Activated naive CD4-positive, alpha-beta T cell treated with anti-CD3 and anti-CD28 coated beads for 36 hours (primary cell): ENCODE measurements at regions of chr2 and their contacts with region 1.

Region 1: DNA sequence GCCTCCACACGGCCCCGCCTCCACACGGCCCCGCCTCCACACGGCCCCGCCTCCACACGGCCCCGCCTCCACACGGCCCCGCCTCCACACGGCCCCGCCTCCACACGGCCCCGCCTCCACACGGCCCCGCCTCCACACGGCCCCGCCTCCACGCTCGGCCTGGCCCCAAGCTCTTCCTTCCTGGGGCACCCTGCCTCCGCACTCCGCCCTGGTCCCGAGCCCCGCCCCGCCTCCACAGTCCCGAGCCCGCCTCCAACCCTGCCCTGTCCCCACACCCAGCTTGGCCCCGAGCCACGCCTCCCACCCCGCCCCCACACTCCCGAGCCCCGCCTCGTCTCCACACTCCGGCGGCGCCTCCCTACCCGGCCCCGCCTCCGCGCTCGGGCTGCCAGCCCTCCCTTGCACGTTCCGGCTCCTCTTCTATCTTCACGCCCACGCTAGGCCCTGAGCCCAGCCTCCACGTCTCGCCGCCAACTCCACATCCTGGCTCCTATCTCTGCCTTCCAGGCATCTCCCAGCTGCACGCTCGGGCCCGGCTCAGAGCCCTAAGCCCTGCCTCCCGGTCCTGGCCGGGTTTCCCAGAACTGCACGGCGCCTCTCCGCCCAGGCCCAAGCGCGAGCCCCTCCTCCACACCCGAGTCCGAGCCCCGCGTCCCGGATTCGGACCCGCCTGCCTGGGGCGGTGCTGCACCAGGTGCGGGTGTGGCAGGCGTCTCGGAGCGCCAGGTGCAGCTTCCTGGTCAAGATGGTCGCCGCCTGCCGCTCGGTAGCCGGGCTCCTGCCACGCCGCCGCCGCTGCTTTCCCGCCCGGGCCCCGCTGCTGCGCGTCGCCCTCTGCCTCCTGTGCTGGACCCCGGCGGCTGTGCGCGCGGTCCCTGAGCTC is at the start of gene TMEM87B:
- DNase-seq: peak; percentile 99
- H3K4me3 Mint-ChIP-seq: peak within 1 kb of the TSS; percentile 97
- H3K27ac Mint-ChIP-seq: peak within 1 kb of the TSS; percentile 99
- H3K4me1 Mint-ChIP-seq: peaks cover 42% of the 10 kb centered on the region
- H3K27me3 Mint-ChIP-seq: no peaks in the 10 kb centered on the region
- total RNA-seq, gene TMEM87B: 10.5 to 12.0 TPM

Region 2: GRCh38 chr2:112092286-112093041 is 37.4 kb after region 1 on chr2:
- CTCF ChIA-PET with region 1: interaction called, 3 read pairs
- intact Hi-C with region 1: loop called (anchors 5 kb)
- DNase-seq: peak; percentile 25
- H3K4me3 Mint-ChIP-seq: no peak overlapping the region
- H3K27ac Mint-ChIP-seq: no peak overlapping the region
- H3K4me1 Mint-ChIP-seq: peaks cover 17% of the 10 kb centered on the region
- H3K27me3 Mint-ChIP-seq: no peaks in the 10 kb centered on the region

Region 3: DNA sequence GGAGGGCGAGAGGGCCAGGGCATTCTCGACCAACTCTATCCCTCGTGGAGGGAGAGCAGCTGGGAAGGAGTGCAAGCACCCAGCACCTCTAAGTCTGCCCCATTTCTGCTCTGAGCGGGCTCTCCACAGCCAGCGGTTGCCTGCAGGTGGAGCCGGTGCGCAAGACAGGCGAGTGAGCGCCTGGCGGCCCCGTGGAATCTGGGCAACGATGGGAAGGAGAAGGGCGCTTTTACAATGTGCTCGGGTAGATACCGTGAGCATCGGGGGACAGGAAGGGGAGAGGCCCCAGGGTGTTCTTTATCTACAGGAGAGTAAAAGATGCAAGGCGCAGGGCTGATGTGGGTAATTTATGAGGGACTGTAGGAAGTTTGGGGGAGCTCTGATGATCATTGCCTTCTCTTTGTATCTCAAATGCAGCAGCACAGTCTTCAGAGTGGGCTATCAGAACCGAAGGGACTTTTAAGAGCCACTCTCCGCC is 426.0 kb after region 1 on chr2:
- CTCF ChIA-PET with region 1: no interaction called
- intact Hi-C with region 1: loop called (anchors 2 kb)
- DNase-seq: peak; percentile 91
- H3K4me3 Mint-ChIP-seq: peak overlapping the region; percentile 95
- H3K27ac Mint-ChIP-seq: peak overlapping the region; percentile 81
- H3K4me1 Mint-ChIP-seq: peaks cover 28% of the 10 kb centered on the region
- H3K27me3 Mint-ChIP-seq: no peaks in the 10 kb centered on the region

Region 4: GRCh38 chr2:112542123-112542983 is 487.3 kb after region 1 on chr2 and contains the start of gene POLR1B:
- CTCF ChIA-PET with region 1: no interaction called
- intact Hi-C with region 1: loop called (anchors 2 kb)
- DNase-seq: peak; percentile 82
- H3K4me3 Mint-ChIP-seq: no peak within 1 kb of the TSS
- H3K27ac Mint-ChIP-seq: no peak within 1 kb of the TSS
- H3K4me1 Mint-ChIP-seq: peaks cover 19% of the 10 kb centered on the region
- H3K27me3 Mint-ChIP-seq: no peaks in the 10 kb centered on the region
- total RNA-seq, gene POLR1B: 34.5 to 36.1 TPM